HepG2 (cell line): ENCODE measurements at regions of chr15 and their contacts with region 1.

Region 1: DNA sequence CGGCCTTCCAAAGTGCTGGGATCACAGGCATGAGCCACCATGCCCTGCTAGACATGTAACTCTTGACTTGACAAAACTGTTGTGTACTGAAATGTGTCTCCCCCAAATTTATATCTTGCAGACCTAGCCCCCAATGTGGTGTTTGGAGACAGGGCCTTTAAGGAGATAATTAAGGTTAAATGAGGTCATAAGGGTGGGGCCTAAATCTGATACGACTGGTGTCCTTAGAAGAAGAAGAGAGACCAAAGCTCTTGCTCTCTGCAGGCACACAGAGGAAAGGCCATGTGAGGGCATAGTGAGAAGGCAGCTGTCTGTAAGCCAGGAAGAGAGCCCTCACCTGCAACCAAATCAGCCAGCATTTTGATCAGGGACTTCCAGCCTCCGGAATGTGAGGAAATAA is 361.3 kb downstream of the SV2B start:
- DNase-seq: no peak
- ATAC-seq: no peak
- H3K4me3 ChIP-seq: no peak overlapping the region
- H3K27ac ChIP-seq: no peak overlapping the region
- H3K4me1 ChIP-seq: no peaks in the 10 kb centered on the region
- H3K27me3 ChIP-seq: no peaks in the 10 kb centered on the region; a peak in 1 of 5 replicates
- CTCF ChIP-seq: no peak
- EP300 ChIP-seq: no peak
- POLR2A ChIP-seq: no peak
- RAD21 ChIP-seq: no peak

Region 2: DNA sequence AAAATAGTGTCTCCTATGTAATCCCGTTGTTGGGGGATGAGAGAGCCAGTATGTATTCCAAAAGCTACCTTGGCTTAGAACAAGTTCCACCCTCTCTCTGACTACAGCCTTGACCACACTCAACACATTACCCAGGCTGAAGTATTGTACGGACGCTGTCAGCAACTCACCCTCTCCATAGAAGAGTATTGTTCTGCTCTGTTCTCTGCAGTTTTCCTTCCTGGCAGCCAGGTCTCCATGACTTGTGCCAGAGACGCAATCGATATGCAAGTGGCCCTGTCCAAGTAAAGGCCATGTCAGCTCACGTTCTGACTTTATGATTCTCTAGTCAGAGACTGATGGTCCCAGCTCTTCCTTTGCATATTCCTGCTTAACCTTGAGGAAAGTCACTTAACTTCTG is 228.0 kb after region 1 on chr15:
- CTCF ChIA-PET with region 1: no interaction called
- POLR2A ChIA-PET with region 1: no interaction called
- in situ Hi-C with region 1: no loop called
- intact Hi-C with region 1: loop called (anchors 5 kb)
- DNase-seq: no peak
- ATAC-seq: no peak
- H3K4me3 ChIP-seq: no peak overlapping the region
- H3K27ac ChIP-seq: no peak overlapping the region
- H3K4me1 ChIP-seq: peaks cover 2% of the 10 kb centered on the region
- H3K27me3 ChIP-seq: peaks cover 0 to 17% of the 10 kb centered on the region in 2 experiments; a peak in 2 of 5 replicates
- CTCF ChIP-seq: no peak
- EP300 ChIP-seq: no peak
- POLR2A ChIP-seq: no peak
- RAD21 ChIP-seq: no peak